B cell (primary cell): ENCODE measurements at regions of chr1 and their contacts with region 1.

Region 1: GRCh38 chr1:86913896-86914634 is at the start of gene SELENOF:
- DNase-seq: peak; percentile 100
- ATAC-seq: peak; percentile 87
- H3K4me3 ChIP-seq: peak within 1 kb of the TSS; percentile 91 to 100 (median 94)
- H3K4me3 Mint-ChIP-seq: no peak within 1 kb of the TSS
- H3K27ac ChIP-seq: peak within 1 kb of the TSS; percentile 94 to 97
- H3K27ac Mint-ChIP-seq: no peak within 1 kb of the TSS
- H3K4me1 ChIP-seq: peaks cover 31 to 34% of the 10 kb centered on the region in 2 donors
- H3K4me1 Mint-ChIP-seq: peaks cover 48% of the 10 kb centered on the region
- H3K27me3 ChIP-seq: no peaks in the 10 kb centered on the region
- H3K27me3 Mint-ChIP-seq: no peaks in the 10 kb centered on the region
- CTCF ChIP-seq: no peak
- total RNA-seq, gene SELENOF: 178 and 185 TPM in 2 replicates

Region 2: DNA sequence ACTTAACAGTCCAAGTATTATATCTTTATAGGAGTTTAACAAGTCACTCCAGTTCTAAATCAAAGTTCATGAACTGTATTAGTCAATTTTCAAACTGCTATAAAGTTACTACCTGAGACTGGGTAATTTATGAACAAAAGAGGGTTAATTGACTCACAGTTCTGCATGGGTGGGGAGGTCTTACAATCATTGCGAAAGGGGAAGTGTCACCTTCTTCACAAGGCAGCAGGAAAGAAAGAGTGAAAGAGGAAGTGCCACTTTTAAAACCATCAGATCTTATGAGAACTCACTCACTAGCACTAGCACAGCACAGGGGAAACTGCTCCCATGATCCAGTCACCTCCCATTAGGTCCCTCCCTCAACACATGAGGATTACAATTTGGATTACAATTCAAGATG is 297.2 kb before region 1 on chr1:
- CTCF ChIA-PET with region 1: no interaction called
- POLR2A ChIA-PET with region 1: no interaction called
- intact Hi-C with region 1: loop called (anchors 5 kb)
- DNase-seq: peak; percentile 88
- ATAC-seq: peak; percentile 99
- H3K4me3 ChIP-seq: peak overlapping the region in 1 of 5 experiments; percentile 31
- H3K4me3 Mint-ChIP-seq: peak overlapping the region; percentile 27
- H3K27ac ChIP-seq: peak overlapping the region; percentile 65 to 77
- H3K27ac Mint-ChIP-seq: peak overlapping the region; percentile 70
- H3K4me1 ChIP-seq: peaks cover 22 to 23% of the 10 kb centered on the region in 2 donors
- H3K4me1 Mint-ChIP-seq: peaks cover 42% of the 10 kb centered on the region
- H3K27me3 ChIP-seq: no peaks in the 10 kb centered on the region
- H3K27me3 Mint-ChIP-seq: no peaks in the 10 kb centered on the region
- CTCF ChIP-seq: no peak

Region 3: GRCh38 chr1:86704458-86704971 is 209.6 kb before region 1 on chr1 and contains the start of gene SH3GLB1:
- CTCF ChIA-PET with region 1: interaction called, 7 read pairs
- POLR2A ChIA-PET with region 1: interaction called, 20 read pairs
- intact Hi-C with region 1: loop called (anchors 1 kb)
- DNase-seq: peak; percentile 97
- ATAC-seq: peak; percentile 85
- H3K4me3 ChIP-seq: peak within 1 kb of the TSS; percentile 79 to 90 (median 82)
- H3K4me3 Mint-ChIP-seq: peak within 1 kb of the TSS; percentile 98
- H3K27ac ChIP-seq: peak within 1 kb of the TSS; percentile 78 to 93
- H3K27ac Mint-ChIP-seq: peak within 1 kb of the TSS; percentile 100
- H3K4me1 ChIP-seq: peaks cover 24 to 30% of the 10 kb centered on the region in 2 donors
- H3K4me1 Mint-ChIP-seq: peaks cover 44% of the 10 kb centered on the region
- H3K27me3 ChIP-seq: no peaks in the 10 kb centered on the region
- H3K27me3 Mint-ChIP-seq: no peaks in the 10 kb centered on the region
- CTCF ChIP-seq: peak; percentile 91
- total RNA-seq, gene SH3GLB1: 55.3 and 57.3 TPM in 2 replicates

Region 4: GRCh38 chr1:86833461-86834215 is 80.4 kb before region 1 on chr1:
- CTCF ChIA-PET with region 1: interaction called, 16 read pairs
- POLR2A ChIA-PET with region 1: no interaction called
- intact Hi-C with region 1: no loop called
- DNase-seq: peak; percentile 81
- ATAC-seq: peak; percentile 70
- H3K4me3 ChIP-seq: no peak overlapping the region
- H3K4me3 Mint-ChIP-seq: no peak overlapping the region
- H3K27ac ChIP-seq: no peak overlapping the region
- H3K27ac Mint-ChIP-seq: no peak overlapping the region
- H3K4me1 ChIP-seq: peaks cover 0 to 5% of the 10 kb centered on the region in 2 donors
- H3K4me1 Mint-ChIP-seq: peaks cover 5% of the 10 kb centered on the region
- H3K27me3 ChIP-seq: no peaks in the 10 kb centered on the region
- H3K27me3 Mint-ChIP-seq: no peaks in the 10 kb centered on the region
- CTCF ChIP-seq: peak; percentile 76

Region 5: GRCh38 chr1:86866665-86867064 is 47.4 kb before region 1 on chr1:
- CTCF ChIA-PET with region 1: no interaction called
- POLR2A ChIA-PET with region 1: interaction called, 3 read pairs
- intact Hi-C with region 1: loop called (anchors 5 kb)
- DNase-seq: no peak
- ATAC-seq: peak; percentile 19
- H3K4me3 ChIP-seq: peak overlapping the region in 1 of 5 experiments; percentile 41
- H3K4me3 Mint-ChIP-seq: peak overlapping the region; percentile 78
- H3K27ac ChIP-seq: peak overlapping the region; percentile 37 to 74
- H3K27ac Mint-ChIP-seq: peak overlapping the region; percentile 92
- H3K4me1 ChIP-seq: peaks cover 20 to 27% of the 10 kb centered on the region in 2 donors
- H3K4me1 Mint-ChIP-seq: peaks cover 42% of the 10 kb centered on the region
- H3K27me3 ChIP-seq: no peaks in the 10 kb centered on the region
- H3K27me3 Mint-ChIP-seq: no peaks in the 10 kb centered on the region
- CTCF ChIP-seq: no peak

Region 6: DNA sequence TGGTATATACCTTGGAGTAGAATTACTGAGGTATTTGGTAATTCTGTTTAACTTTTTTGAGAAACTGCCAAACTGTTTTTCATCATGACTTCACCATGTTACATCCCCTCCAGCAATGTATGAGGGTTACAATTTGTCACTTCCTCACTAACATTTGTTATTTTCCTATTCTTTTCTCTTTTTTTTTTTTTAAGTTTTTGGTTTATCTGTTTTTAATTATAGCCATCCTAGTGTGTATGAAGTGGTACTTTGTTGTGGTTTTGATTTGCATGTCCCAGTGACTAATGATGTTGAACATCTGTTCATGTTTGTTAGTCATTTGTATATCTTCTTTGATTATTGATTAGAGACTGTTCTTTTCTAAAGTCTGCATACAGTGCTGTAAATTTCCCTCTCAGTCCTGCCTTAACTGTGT is 147.7 kb after region 1 on chr1:
- CTCF ChIA-PET with region 1: no interaction called
- POLR2A ChIA-PET with region 1: interaction called, 8 read pairs
- intact Hi-C with region 1: loop called (anchors 2 kb)
- DNase-seq: peak; percentile 57
- ATAC-seq: peak; percentile 35
- H3K4me3 ChIP-seq: no peak overlapping the region
- H3K4me3 Mint-ChIP-seq: peak overlapping the region; percentile 68
- H3K27ac ChIP-seq: peak overlapping the region; percentile 59 to 73
- H3K27ac Mint-ChIP-seq: peak overlapping the region; percentile 79
- H3K4me1 ChIP-seq: peaks cover 49 to 81% of the 10 kb centered on the region in 2 donors
- H3K4me1 Mint-ChIP-seq: peaks cover 80% of the 10 kb centered on the region
- H3K27me3 ChIP-seq: no peaks in the 10 kb centered on the region
- H3K27me3 Mint-ChIP-seq: no peaks in the 10 kb centered on the region
- CTCF ChIP-seq: no peak

Region 7: GRCh38 chr1:87916965-87917364 is 1002.9 kb after region 1 on chr1:
- CTCF ChIA-PET with region 1: no interaction called
- POLR2A ChIA-PET with region 1: no interaction called
- intact Hi-C with region 1: no loop called
- DNase-seq: no peak
- ATAC-seq: no peak
- H3K4me3 ChIP-seq: no peak overlapping the region
- H3K4me3 Mint-ChIP-seq: no peak overlapping the region
- H3K27ac ChIP-seq: no peak overlapping the region
- H3K27ac Mint-ChIP-seq: no peak overlapping the region
- H3K4me1 ChIP-seq: no peaks in the 10 kb centered on the region
- H3K4me1 Mint-ChIP-seq: no peaks in the 10 kb centered on the region
- H3K27me3 ChIP-seq: no peaks in the 10 kb centered on the region
- H3K27me3 Mint-ChIP-seq: peaks cover 2% of the 10 kb centered on the region
- CTCF ChIP-seq: no peak